AG04450 (cell line): ENCODE measurements at regions of chr6 and their contacts with region 1.

Region 1: GRCh38 chr6:142387997-142388815 is 86.4 kb downstream of the ADGRG6 start:
- DNase-seq: no peak
- H3K4me3 ChIP-seq: no peak overlapping the region
- H3K27ac ChIP-seq: no peak overlapping the region
- H3K27me3 ChIP-seq: no peaks in the 10 kb centered on the region
- CTCF ChIP-seq: peak; percentile 78

Region 2: DNA sequence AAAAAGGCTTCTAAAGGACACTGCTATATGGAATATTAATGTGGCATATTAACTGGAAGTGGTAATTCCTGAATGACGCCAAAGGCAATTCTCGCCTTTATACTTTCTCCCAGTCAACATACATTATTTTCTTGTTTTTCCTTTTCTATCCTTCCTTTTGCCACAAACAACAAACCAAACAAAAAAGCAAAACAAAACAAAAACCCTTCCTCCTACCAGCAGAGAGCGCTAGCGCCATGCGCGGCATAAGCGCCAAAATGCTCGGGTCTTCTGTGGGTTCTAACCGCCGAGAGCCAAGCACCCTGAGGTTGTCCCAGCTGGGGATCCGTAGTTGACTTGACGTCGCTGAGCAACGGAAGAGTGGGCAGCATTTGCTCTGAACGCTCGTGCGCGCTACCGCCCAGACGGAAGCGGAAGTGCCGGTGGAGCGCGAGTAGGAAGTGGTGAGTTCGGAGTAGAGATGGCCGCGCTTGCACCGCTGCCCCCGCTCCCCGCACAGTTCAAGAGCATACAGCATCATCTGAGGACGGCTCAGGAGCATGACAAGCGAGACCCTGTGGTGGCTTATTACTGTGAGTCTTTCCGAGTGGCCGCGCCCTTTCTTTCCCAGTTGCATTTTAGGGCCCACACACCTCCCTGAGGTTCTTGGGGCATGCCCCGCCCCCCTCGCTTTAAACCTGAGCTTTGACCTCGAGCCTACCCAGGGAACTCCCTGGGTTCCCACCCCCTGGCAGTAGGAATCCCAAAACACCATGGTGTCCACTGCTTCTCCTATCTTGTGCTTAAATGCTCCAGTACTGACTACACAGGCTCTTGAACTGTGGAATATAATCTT is 241.2 kb before region 1 on chr6 and contains the starts of genes NMBR and VTA1:
- CTCF ChIA-PET with region 1: interaction called, 11 read pairs
- POLR2A ChIA-PET with region 1: no interaction called
- DNase-seq: peak; percentile 99
- H3K4me3 ChIP-seq: peak within 1 kb of the TSS; percentile 97
- H3K27ac ChIP-seq: peak within 1 kb of the TSS; percentile 3
- H3K27me3 ChIP-seq: no peaks in the 10 kb centered on the region
- CTCF ChIP-seq: peak; percentile 98
- polyA plus RNA-seq, gene NMBR: 0.15 TPM in 1 of 2 replicates, not detected in the other
- polyA plus RNA-seq, gene VTA1: 81.4 and 103 TPM in 2 replicates

Region 3: GRCh38 chr6:142408406-142408805 is 20.2 kb after region 1 on chr6:
- CTCF ChIA-PET with region 1: no interaction called
- POLR2A ChIA-PET with region 1: no interaction called
- DNase-seq: no peak
- H3K4me3 ChIP-seq: no peak overlapping the region
- H3K27ac ChIP-seq: no peak overlapping the region
- H3K27me3 ChIP-seq: no peaks in the 10 kb centered on the region
- CTCF ChIP-seq: peak; percentile 28; the same call in 1 of the 2 replicates